Panc1 (cell line): ENCODE measurements at regions of chr20 and their contacts with region 1.

Region 1: GRCh38 chr20:37178839-37179670 is at the starts of genes MROH8 and RPN2:
- DNase-seq: peak; percentile 92
- ATAC-seq: peak; percentile 99
- H3K4me3 ChIP-seq: peak within 1 kb of the TSS; percentile 80 to 97
- H3K27ac ChIP-seq: peak within 1 kb of the TSS; percentile 96
- H3K4me1 ChIP-seq: peaks cover 13% of the 10 kb centered on the region; the same call in 1 of the 2 replicates
- H3K27me3 ChIP-seq: no peaks in the 10 kb centered on the region
- CTCF ChIP-seq: no peak
- total RNA-seq, gene MROH8: 1.8 TPM
- total RNA-seq, gene RPN2: 250 TPM

Region 2: GRCh38 chr20:36929290-36929689 is 249.8 kb before region 1 on chr20:
- CTCF ChIA-PET with region 1: no interaction called
- POLR2A ChIA-PET with region 1: no interaction called
- in situ Hi-C with region 1: no loop called
- intact Hi-C with region 1: no loop called
- DNase-seq: no peak
- ATAC-seq: no peak
- H3K4me3 ChIP-seq: no peak overlapping the region
- H3K27ac ChIP-seq: no peak overlapping the region
- H3K4me1 ChIP-seq: no peaks in the 10 kb centered on the region
- H3K27me3 ChIP-seq: no peaks in the 10 kb centered on the region
- CTCF ChIP-seq: no peak

Region 3: DNA sequence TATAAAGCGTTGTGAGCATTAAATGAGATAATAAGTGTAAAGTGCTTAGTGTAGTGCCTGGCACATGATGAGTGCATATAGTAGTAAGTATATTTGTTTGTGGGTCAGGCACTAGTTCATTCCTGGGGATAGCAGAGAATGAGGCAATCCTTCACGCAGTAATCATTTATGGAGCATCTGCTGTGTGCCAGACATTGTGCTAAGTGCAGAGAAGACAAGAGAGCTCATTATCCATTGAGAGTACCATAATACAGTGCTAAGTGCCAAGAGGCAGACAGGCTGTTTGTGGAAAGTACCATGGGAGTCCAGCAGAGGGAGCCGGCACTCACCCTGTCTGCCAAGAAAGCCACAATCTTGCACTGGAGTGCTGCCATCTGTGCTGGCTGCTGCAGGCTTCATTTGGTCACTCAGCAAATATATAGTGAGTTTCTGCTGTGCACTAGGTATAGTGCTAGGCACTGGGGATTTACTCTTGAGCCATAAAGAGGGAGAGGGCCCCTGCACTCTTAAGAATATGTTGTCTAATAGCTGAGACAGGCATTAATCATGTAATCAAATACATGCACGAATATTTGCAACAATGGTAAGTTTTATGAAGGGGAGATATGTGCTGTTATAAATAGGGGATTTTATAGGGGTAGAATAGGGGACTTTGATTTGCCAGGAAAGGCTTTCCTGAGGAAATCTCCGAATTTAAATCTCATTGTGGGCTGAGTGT is 13.2 kb after region 1 on chr20:
- CTCF ChIA-PET with region 1: interaction called, 11 read pairs
- POLR2A ChIA-PET with region 1: interaction called, 6 read pairs
- in situ Hi-C with region 1: no loop called
- intact Hi-C with region 1: no loop called
- DNase-seq: peak; percentile 61
- ATAC-seq: peak; percentile 91
- H3K4me3 ChIP-seq: no peak overlapping the region
- H3K27ac ChIP-seq: no peak overlapping the region
- H3K4me1 ChIP-seq: no peaks in the 10 kb centered on the region; the same call in 1 of the 2 replicates
- H3K27me3 ChIP-seq: no peaks in the 10 kb centered on the region
- CTCF ChIP-seq: peak; percentile 95

Region 4: GRCh38 chr20:37276494-37277252 is 97.6 kb after region 1 on chr20:
- CTCF ChIA-PET with region 1: no interaction called
- POLR2A ChIA-PET with region 1: no interaction called
- in situ Hi-C with region 1: no loop called
- intact Hi-C with region 1: no loop called
- DNase-seq: no peak
- ATAC-seq: peak; percentile 85
- H3K4me3 ChIP-seq: no peak overlapping the region
- H3K27ac ChIP-seq: no peak overlapping the region
- H3K4me1 ChIP-seq: peaks cover 4% of the 10 kb centered on the region; the same call in 1 of the 2 replicates
- H3K27me3 ChIP-seq: no peaks in the 10 kb centered on the region
- CTCF ChIP-seq: no peak; the same call in 1 of the 2 replicates